Prostate gland (tissue), 2 donors: ENCODE measurements at regions of chr11 and their contacts with region 1.

Region 1: GRCh38 chr11:76860539-76861475 is at the start of gene ACER3:
- DNase-seq: peak; percentile 87
- H3K4me3 ChIP-seq: peak within 1 kb of the TSS; percentile 54 to 65
- H3K27ac ChIP-seq: peak within 1 kb of the TSS; percentile 76 to 88
- H3K4me1 ChIP-seq: peaks cover 6% of the 10 kb centered on the region
- H3K27me3 ChIP-seq: no peaks in the 10 kb centered on the region
- CTCF ChIP-seq: peak in 1 of 4 experiments; percentile 7
- POLR2A ChIP-seq: peak; percentile 85
- total RNA-seq, gene ACER3: 11.3 to 11.9 TPM

Region 2: DNA sequence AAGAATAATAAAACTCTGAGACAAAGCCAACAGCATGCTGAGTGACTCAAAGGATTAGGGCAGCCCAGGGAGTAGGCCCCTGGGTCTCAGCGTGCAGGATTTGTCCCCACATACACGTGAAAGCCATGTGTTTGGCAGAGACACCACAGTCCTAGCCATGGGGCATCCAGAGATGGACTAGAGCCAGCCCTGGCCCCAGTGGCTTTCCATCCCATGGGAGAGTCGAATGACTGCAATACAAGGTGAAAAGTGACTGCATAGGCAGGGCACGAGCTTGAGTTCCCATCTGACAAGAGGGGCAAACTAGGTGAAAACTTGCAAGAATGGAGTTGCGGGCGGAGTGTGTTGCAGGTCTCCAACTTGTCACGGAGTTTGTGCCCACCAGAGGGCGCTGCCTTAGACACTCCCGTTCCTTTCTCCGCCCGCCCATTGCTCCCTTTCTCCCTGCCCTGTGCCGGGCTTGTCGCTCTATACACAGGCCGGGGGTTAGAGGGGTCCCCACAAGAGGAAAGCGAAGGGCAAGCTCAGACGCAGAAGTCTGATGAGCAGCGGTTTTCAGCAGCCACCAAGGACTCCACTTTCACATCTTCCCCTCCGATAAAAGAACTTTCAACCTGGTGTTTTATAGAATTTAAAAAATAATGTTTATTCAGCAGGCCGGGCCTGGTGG is 53.5 kb before region 1 on chr11:
- intact Hi-C with region 1: loop called (anchors 5 kb)
- DNase-seq: peak; percentile 88
- H3K4me3 ChIP-seq: no peak overlapping the region
- H3K27ac ChIP-seq: no peak overlapping the region
- H3K4me1 ChIP-seq: no peaks in the 10 kb centered on the region
- H3K27me3 ChIP-seq: no peaks in the 10 kb centered on the region
- CTCF ChIP-seq: peak; percentile 71 to 83 (median 76)
- POLR2A ChIP-seq: no peak

Region 3: GRCh38 chr11:77082838-77083562 is 222.2 kb after region 1 on chr11:
- intact Hi-C with region 1: no loop called
- DNase-seq: no peak
- H3K4me3 ChIP-seq: no peak overlapping the region
- H3K27ac ChIP-seq: peak overlapping the region in 1 of 2 donors; percentile 19
- H3K4me1 ChIP-seq: peaks cover under 1% of the 10 kb centered on the region
- H3K27me3 ChIP-seq: no peaks in the 10 kb centered on the region
- CTCF ChIP-seq: no peak
- POLR2A ChIP-seq: no peak